ENCODE measurements at regions of chr9 and their contacts with region 1.

Region 1: DNA sequence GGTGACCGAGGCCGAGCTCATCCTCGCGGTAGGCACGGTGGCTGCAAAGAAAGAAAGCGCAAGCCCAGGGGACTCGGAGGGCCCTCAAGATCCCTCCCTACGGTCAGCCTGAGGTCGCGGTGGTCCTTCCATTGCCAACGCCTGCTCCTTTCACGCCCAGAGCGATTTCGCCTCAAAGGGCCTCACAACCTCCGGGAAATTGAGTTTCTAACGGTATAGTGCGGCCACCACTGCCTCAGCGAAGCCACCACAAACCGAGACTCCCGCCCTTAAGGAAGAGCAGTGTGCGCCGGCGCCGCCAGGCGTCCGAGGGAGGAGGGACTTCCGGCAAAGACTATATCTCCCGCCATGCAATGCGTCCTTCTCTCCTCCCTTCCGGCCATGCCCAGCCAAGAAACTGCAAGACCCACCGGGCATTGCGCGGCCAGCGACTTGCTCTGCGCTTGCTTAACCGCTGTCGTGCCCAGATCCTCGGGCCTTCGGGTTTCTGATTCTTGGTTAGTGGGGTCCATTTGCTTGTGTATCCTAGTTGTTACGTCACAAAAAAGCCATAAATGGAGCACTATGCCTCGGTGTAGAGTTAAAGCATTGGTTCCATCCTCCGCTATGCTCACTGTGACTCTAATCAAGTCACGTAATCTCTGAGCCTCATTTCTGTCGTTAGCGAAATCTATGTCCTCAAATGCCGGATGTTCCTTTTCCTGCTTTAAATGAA is at the start of gene HAUS6:
- DNase-seq: peak; percentile 79 to 97 (median 95)
- ATAC-seq: peak; percentile 98
- H3K4me3 ChIP-seq: peak within 1 kb of the TSS; percentile 62
- H3K4me3 Mint-ChIP-seq: peak within 1 kb of the TSS; percentile 90 to 98 (median 94)
- H3K27ac ChIP-seq: peak within 1 kb of the TSS; percentile 86
- H3K27ac Mint-ChIP-seq: peak within 1 kb of the TSS; percentile 88 to 99 (median 96)
- H3K4me1 ChIP-seq: peaks cover 4 to 9% of the 10 kb centered on the region in 2 donors
- H3K4me1 Mint-ChIP-seq: peaks cover 13 to 43% (median 25%) of the 10 kb centered on the region in 7 donors
- H3K27me3 ChIP-seq: no peaks in the 10 kb centered on the region
- H3K27me3 Mint-ChIP-seq: no peaks in the 10 kb centered on the region
- total RNA-seq, gene HAUS6: 11.4 to 25.4 (median 19.6) TPM

Region 2: DNA sequence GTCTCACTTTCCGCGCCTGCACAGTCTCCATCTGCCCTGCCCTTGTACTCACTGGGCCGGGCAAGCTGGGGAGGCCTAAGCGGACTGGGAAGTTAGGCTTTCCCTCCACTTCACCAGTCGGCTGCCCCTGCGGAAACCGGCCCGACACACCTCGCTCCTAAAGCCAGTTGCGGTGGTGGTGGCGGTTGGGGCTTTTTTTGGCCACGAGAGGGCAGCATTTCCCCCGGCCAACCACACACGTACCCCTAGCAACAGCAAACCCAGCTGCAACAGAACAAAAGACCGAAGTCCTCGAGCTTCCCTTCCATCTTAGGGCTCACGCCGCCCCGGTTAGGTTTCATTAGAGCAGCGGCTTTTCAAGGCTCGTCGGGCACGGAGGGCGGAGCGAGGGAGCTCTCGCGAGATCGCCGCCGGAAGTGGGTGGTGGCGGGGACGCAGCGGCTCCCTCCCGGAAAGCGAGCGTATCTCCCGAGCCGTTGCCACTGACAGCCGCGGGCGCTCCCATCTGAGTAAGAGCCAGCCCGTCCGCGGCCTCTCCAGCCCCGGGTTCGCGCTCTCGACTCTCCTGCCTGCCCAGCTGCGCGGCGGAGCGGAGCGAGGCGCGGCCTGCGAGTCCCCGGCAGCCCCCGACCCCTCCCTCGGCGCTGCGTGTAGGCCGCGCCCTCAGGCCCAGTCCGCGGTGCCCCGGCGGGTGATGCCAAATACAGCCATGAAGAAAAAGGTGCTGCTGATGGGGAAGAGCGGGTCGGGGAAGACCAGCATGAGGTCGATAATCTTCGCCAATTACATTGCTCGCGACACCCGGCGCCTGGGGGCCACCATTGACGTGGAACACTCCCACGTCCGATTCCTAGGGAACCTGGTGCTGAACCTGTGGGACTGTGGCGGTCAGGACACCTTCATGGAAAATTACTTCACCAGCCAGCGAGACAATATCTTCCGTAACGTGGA is 53.5 kb before region 1 on chr9 and contains the start of gene RRAGA:
- CTCF ChIA-PET with region 1: no interaction called
- POLR2A ChIA-PET with region 1: interaction called, 5 read pairs
- intact Hi-C with region 1: loop called (anchors 1 kb)
- DNase-seq: peak; percentile 90 to 96 (median 95)
- ATAC-seq: peak; percentile 95
- H3K4me3 ChIP-seq: peak within 1 kb of the TSS; percentile 88
- H3K4me3 Mint-ChIP-seq: peak within 1 kb of the TSS; percentile 92 to 99 (median 95)
- H3K27ac ChIP-seq: peak within 1 kb of the TSS; percentile 85
- H3K27ac Mint-ChIP-seq: peak within 1 kb of the TSS; percentile 97 to 100 (median 98)
- H3K4me1 ChIP-seq: peaks cover 20% of the 10 kb centered on the region in 2 donors
- H3K4me1 Mint-ChIP-seq: peaks cover 6 to 50% (median 42%) of the 10 kb centered on the region in 7 donors
- H3K27me3 ChIP-seq: no peaks in the 10 kb centered on the region
- H3K27me3 Mint-ChIP-seq: peaks cover 0 to 2% (median 0%) of the 10 kb centered on the region in 5 donors
- total RNA-seq, gene RRAGA: 25.9 to 53.6 (median 51.9) TPM

Region 3: DNA sequence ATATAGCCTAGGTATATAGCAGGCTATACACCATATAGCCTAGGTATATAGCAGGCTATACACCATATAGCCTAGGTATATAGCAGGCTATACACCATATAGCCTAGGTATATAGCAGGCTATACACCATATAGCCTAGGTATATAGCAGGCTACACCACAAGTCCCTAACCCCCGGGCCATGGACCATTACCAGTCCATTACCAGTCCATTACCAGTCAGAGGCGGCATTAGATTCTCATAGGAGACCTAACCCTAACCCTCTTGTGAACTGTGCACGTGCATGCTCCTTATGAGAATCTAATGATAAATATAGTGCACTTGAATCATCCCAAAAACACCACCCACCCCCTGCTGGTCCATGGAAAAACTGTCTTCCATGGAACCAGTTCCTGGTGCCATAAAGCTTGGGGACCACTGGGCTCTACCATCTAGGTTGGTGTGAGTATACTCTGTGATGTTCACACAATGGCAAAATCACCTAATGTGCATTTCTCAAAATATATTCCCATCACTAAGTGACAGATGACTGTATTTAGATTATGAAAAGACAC is 19.8 kb after region 1 on chr9:
- CTCF ChIA-PET with region 1: no interaction called
- POLR2A ChIA-PET with region 1: interaction called, 14 read pairs
- intact Hi-C with region 1: loop called (anchors 1 kb)
- DNase-seq: no peak
- ATAC-seq: no peak
- H3K4me3 ChIP-seq: no peak overlapping the region
- H3K4me3 Mint-ChIP-seq: peak overlapping the region in 3 of 10 donors; percentile 17 to 93 (median 88)
- H3K27ac ChIP-seq: no peak overlapping the region
- H3K27ac Mint-ChIP-seq: peak overlapping the region in 6 of 9 donors; percentile 51 to 96 (median 73)
- H3K4me1 ChIP-seq: peaks cover 22 to 28% of the 10 kb centered on the region in 2 donors
- H3K4me1 Mint-ChIP-seq: peaks cover 20 to 73% (median 39%) of the 10 kb centered on the region in 7 donors
- H3K27me3 ChIP-seq: no peaks in the 10 kb centered on the region
- H3K27me3 Mint-ChIP-seq: no peaks in the 10 kb centered on the region

Region 4: DNA sequence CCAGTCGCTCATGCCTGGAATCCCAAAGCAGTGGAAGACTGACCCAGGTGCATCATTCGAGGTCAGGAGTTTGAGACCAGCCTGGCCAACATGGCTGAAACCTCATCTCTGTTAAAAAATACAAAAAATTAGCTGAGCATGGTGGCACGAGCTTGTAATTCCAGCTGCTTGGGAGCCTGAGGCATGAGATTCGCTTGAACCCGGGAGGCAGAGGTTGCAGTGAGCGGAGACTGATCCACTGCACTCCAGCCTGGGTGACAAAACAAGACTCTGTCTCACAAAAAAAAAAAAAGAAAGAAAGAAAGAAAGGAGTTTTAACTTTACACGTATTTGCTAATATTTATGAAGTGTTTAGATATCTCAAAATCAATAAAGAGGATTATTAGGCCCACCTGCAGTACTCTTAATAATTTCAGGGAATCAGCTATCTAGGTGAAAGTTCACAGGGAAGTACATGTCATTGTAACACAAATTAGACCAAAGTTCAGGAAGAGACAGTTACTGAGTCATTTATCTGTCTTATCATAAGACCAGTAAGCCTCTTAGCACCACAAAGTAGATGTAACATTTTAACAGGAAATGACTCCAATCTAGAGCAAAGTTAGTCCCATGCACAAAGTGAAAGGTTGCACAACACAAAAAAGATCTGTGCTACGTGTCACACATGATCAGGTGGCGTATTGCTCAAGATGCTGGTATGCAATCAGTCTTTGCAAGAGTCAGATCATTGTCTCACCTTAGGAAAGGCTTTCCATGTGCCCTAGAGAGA is 58.7 kb after region 1 on chr9:
- CTCF ChIA-PET with region 1: no interaction called
- POLR2A ChIA-PET with region 1: interaction called, 3 read pairs
- intact Hi-C with region 1: loop called (anchors 1 to 2 kb)
- DNase-seq: peak in 8 of 9 donors; percentile 25 to 63 (median 37)
- ATAC-seq: peak; percentile 94
- H3K4me3 ChIP-seq: no peak overlapping the region
- H3K4me3 Mint-ChIP-seq: peak overlapping the region; percentile 26 to 77 (median 53)
- H3K27ac ChIP-seq: peak overlapping the region; percentile 12
- H3K27ac Mint-ChIP-seq: peak overlapping the region; percentile 72 to 96 (median 81)
- H3K4me1 ChIP-seq: peaks cover 6 to 12% of the 10 kb centered on the region in 2 donors
- H3K4me1 Mint-ChIP-seq: peaks cover 12 to 27% (median 19%) of the 10 kb centered on the region in 7 donors
- H3K27me3 ChIP-seq: no peaks in the 10 kb centered on the region
- H3K27me3 Mint-ChIP-seq: no peaks in the 10 kb centered on the region

Region 5: GRCh38 chr9:19184144-19184917 is 81.5 kb after region 1 on chr9:
- CTCF ChIA-PET with region 1: no interaction called
- POLR2A ChIA-PET with region 1: no interaction called
- intact Hi-C with region 1: loop called (anchors 1 kb)
- DNase-seq: peak; percentile 32 to 75 (median 47)
- ATAC-seq: peak; percentile 97
- H3K4me3 ChIP-seq: no peak overlapping the region
- H3K4me3 Mint-ChIP-seq: peak overlapping the region in 9 of 10 donors; percentile 3 to 66 (median 34)
- H3K27ac ChIP-seq: peak overlapping the region; percentile 62
- H3K27ac Mint-ChIP-seq: peak overlapping the region; percentile 83 to 97 (median 93)
- H3K4me1 ChIP-seq: peaks cover 11 to 17% of the 10 kb centered on the region in 2 donors
- H3K4me1 Mint-ChIP-seq: peaks cover 6 to 19% (median 13%) of the 10 kb centered on the region in 7 donors
- H3K27me3 ChIP-seq: no peaks in the 10 kb centered on the region
- H3K27me3 Mint-ChIP-seq: no peaks in the 10 kb centered on the region

Region 6: GRCh38 chr9:19408693-19409400 is 306.1 kb after region 1 on chr9 and contains the start of gene ACER2:
- CTCF ChIA-PET with region 1: no interaction called
- POLR2A ChIA-PET with region 1: no interaction called
- intact Hi-C with region 1: loop called (anchors 1 kb)
- DNase-seq: peak; percentile 91 to 99 (median 95)
- ATAC-seq: peak; percentile 99
- H3K4me3 ChIP-seq: peak within 1 kb of the TSS; percentile 96
- H3K4me3 Mint-ChIP-seq: peak within 1 kb of the TSS; percentile 92 to 99 (median 94)
- H3K27ac ChIP-seq: peak within 1 kb of the TSS; percentile 72
- H3K27ac Mint-ChIP-seq: peak within 1 kb of the TSS; percentile 74 to 94 (median 82)
- H3K4me1 ChIP-seq: peaks cover 0 to 6% of the 10 kb centered on the region in 2 donors
- H3K4me1 Mint-ChIP-seq: peaks cover 8 to 30% (median 19%) of the 10 kb centered on the region in 7 donors
- H3K27me3 ChIP-seq: no peaks in the 10 kb centered on the region
- H3K27me3 Mint-ChIP-seq: peaks cover 0 to 9% (median 0%) of the 10 kb centered on the region in 5 donors
- total RNA-seq, gene ACER2: 2.0 to 5.7 (median 2.8) TPM

Measured in naive thymus-derived CD4-positive, alpha-beta T cell (primary cell).